Posterior cingulate gyrus (tissue), 11 donors: ENCODE measurements at regions of chr1 and their contacts with region 1.

Region 1: DNA sequence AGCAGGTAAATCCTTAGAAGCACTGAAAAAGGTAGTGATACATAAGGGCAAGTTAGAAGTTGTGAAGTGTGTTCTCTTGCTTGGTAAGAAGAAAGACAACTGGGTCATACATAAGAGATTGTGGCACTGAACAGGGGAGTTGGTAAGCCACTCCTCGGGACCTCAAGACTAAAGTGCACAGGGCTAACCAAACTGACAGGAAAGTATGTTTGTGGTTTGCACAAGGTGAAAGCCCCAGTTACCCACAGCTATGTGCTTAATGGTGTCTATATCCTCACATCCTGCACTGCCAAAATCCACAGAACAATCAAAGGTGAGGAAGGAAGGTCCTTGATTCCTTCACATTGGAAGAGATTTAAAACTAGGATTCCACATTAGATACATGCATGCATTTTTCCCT is 276.5 kb downstream of the DNM3 start:
- DNase-seq: no peak

Region 2: GRCh38 chr1:172167796-172168596 is 50.2 kb after region 1 on chr1:
- intact Hi-C with region 1: loop called (anchors 10 kb)
- DNase-seq: peak in 1 of 10 donors; percentile 31